MCF 10A (cell line): ENCODE measurements at regions of chr9 and their contacts with region 1.

Region 1: DNA sequence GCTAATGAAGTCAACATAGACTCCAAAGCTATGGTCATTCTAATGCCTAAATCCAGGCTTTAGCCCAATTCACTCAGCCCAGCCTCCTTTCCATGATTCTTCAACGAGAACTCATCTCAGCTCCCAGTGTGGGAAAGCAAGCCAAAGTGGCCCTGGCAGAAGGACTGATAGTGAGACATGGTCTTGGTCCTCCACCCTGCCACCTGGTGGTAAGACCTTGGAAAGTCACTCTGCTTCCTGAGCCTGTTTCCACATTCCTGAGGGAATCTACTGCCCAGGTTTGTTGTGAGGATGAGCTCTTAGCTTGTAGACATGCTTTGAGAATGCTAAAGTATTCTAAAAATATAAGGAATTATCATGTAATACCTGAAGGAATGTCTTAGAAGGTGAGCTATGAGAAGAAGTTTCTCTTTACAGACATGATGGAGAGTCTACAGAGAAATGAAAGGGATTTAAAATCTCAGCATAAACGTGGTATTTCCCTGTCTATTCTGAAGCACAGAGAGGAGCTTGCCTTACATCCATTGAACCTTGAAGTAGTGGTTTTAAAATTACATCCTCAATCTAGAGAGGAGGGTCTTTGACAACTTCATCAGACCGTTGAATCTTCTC is 173.5 kb downstream of the TRIM32 start:
- DNase-seq: peak; percentile 86
- H3K4me3 Mint-ChIP-seq: no peak overlapping the region
- H3K27ac Mint-ChIP-seq: peak overlapping the region; percentile 85
- H3K4me1 Mint-ChIP-seq: peaks cover 26% of the 10 kb centered on the region
- H3K27me3 Mint-ChIP-seq: no peaks in the 10 kb centered on the region
- CTCF ChIP-seq: peak; percentile 80

Region 2: GRCh38 chr9:116749176-116749575 is 111.4 kb before region 1 on chr9:
- CTCF ChIA-PET with region 1: interaction called, 41 read pairs
- POLR2A ChIA-PET with region 1: interaction called, 3 read pairs
- intact Hi-C with region 1: no loop called
- DNase-seq: no peak
- H3K4me3 Mint-ChIP-seq: no peak overlapping the region
- H3K27ac Mint-ChIP-seq: no peak overlapping the region
- H3K4me1 Mint-ChIP-seq: peaks cover 9% of the 10 kb centered on the region
- H3K27me3 Mint-ChIP-seq: no peaks in the 10 kb centered on the region
- CTCF ChIP-seq: no peak

Region 3: DNA sequence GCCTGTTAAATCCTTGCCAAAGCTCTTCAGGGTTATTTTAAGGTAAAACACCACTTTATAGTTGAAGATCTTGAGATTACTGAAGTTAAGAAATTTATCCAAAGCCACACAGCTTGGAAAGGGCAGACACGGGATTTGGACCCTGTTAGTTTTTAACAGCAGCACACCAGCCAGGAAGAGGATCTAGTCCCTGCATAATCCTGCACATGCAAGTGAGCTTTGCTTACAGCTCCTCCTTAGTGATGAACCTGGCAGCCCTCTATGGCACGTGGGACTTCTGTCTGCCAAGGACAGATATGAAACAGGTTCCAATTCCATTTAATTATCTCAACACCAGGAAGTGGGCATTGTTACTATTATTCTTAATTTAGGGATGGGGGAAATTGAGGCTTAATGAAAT is 64.8 kb before region 1 on chr9:
- CTCF ChIA-PET with region 1: interaction called, 19 read pairs
- POLR2A ChIA-PET with region 1: no interaction called
- intact Hi-C with region 1: no loop called
- DNase-seq: no peak
- H3K4me3 Mint-ChIP-seq: no peak overlapping the region
- H3K27ac Mint-ChIP-seq: no peak overlapping the region
- H3K4me1 Mint-ChIP-seq: peaks cover 2% of the 10 kb centered on the region
- H3K27me3 Mint-ChIP-seq: no peaks in the 10 kb centered on the region
- CTCF ChIP-seq: no peak

Region 4: GRCh38 chr9:116837018-116837989 is 23.3 kb before region 1 on chr9:
- CTCF ChIA-PET with region 1: interaction called, 60 read pairs
- POLR2A ChIA-PET with region 1: interaction called, 63 read pairs
- intact Hi-C with region 1: loop called (anchors 1 kb)
- DNase-seq: peak; percentile 91
- H3K4me3 Mint-ChIP-seq: peak overlapping the region; percentile 75
- H3K27ac Mint-ChIP-seq: peak overlapping the region; percentile 98
- H3K4me1 Mint-ChIP-seq: peaks cover 27% of the 10 kb centered on the region
- H3K27me3 Mint-ChIP-seq: no peaks in the 10 kb centered on the region
- CTCF ChIP-seq: no peak

Region 5: GRCh38 chr9:116899337-116900006 is 38.9 kb after region 1 on chr9:
- CTCF ChIA-PET with region 1: interaction called, 16 read pairs
- POLR2A ChIA-PET with region 1: no interaction called
- intact Hi-C with region 1: no loop called
- DNase-seq: no peak
- H3K4me3 Mint-ChIP-seq: no peak overlapping the region
- H3K27ac Mint-ChIP-seq: no peak overlapping the region
- H3K4me1 Mint-ChIP-seq: no peaks in the 10 kb centered on the region
- H3K27me3 Mint-ChIP-seq: no peaks in the 10 kb centered on the region
- CTCF ChIP-seq: no peak